ENCODE measurements at regions of chr5 and their contacts with region 1.

Region 1: DNA sequence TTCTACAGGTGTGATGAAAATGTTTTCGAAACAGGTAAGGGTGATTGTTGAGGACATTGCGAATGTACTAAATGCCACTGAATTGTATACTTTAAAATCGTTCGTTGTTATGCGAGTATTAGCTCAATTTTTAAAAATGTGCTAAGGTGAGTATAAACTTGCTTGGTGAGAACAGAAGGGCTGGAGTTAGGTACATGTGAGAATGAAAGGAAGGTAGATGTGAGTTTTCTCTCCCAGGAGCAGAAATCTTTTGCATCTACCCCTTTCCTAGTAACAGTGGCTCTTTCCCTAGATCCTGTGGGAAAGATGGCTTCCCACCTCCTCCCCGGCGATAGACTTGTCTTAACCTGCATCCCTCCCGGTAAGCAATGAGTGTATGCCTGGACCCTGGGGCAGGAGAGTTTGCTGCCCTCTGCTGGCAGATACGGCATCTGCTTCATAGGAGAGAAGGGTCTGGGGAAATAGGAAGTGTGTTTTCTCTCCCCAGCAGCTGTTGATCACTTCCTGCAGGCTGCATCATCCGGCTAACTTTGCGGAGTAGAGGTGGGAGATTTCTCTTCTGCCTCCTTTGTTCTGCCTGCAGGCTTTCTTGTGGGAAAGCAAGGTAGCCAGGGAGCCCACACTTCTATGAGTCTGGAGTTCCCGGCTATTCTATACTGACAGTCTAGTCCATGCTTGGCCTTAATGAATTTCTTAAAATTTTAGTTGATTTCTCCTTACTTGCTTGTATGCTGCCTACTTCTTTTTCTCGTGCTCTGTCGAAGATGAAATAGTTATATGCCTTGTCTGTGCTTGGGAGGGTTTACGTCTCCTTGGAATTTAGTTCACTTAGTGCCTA is 373.3 kb upstream of the SEMA6A start:
- DNase-seq: peak; percentile 73
- H3K4me3 ChIP-seq: no peak overlapping the region
- H3K27ac ChIP-seq: no peak overlapping the region
- H3K4me1 ChIP-seq: no peaks in the 10 kb centered on the region
- H3K27me3 ChIP-seq: no peaks in the 10 kb centered on the region
- CTCF ChIP-seq: peak; percentile 80 to 92

Region 2: DNA sequence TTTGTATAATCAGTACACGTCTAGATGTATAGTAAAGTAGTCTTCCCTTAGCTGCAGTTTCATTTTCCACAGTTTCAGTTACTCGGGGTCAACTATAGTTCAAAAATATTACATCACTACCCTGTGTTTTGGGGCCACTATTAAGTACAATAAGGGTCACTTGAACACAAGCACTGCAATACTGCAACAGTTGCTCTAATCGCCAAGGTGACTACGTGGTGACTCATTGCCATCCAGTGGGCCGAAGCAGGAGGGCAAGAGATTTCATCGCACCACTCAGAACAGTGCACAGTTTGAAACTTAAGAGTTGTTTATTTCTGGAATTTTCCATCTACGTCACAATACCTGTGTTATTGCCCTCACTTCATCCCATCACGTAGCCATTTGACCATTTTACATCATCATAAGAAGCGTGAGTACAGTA is 915.8 kb before region 1 on chr5 and contains the start of gene ARL14EPL:
- CTCF ChIA-PET with region 1: no interaction called
- dilution Hi-C with region 1: no loop called
- in situ Hi-C with region 1: no loop called
- intact Hi-C with region 1: no loop called
- DNase-seq: peak; percentile 71
- H3K4me3 ChIP-seq: no peak within 1 kb of the TSS
- H3K27ac ChIP-seq: no peak within 1 kb of the TSS
- H3K4me1 ChIP-seq: no peaks in the 10 kb centered on the region
- H3K27me3 ChIP-seq: peaks cover 3% of the 10 kb centered on the region
- CTCF ChIP-seq: no peak
- total RNA-seq, gene ARL14EPL: not detected

Region 3: GRCh38 chr5:116557669-116558271 is 390.1 kb before region 1 on chr5:
- CTCF ChIA-PET with region 1: no interaction called
- dilution Hi-C with region 1: no loop called
- in situ Hi-C with region 1: loop called in 1 of 2 experiments (anchors 10 kb)
- intact Hi-C with region 1: loop called (anchors 1 kb)
- DNase-seq: peak; percentile 9
- H3K4me3 ChIP-seq: no peak overlapping the region
- H3K27ac ChIP-seq: no peak overlapping the region
- H3K4me1 ChIP-seq: no peaks in the 10 kb centered on the region
- H3K27me3 ChIP-seq: peaks cover 7% of the 10 kb centered on the region
- CTCF ChIP-seq: peak; percentile 56 to 76

Region 4: DNA sequence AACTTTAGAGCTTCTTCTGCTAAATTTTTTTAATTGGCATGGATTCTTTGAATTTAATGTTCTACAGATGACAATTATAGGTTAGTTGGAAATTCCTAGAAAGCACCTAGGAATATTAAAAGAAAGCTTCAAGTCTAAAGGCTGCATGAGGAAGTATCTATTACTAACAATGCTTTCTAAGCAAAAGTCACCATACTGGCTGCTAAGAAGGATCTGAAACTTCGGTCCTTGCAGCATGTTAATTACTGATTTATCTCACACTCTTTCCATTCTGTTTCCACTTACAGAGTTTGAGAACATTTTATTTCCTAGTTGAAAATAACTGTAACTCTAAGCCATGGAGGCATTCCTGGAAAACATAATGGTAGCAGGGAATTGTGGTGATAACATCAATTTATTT is 381.7 kb before region 1 on chr5:
- CTCF ChIA-PET with region 1: no interaction called
- dilution Hi-C with region 1: no loop called
- in situ Hi-C with region 1: loop called in 1 of 2 experiments (anchors 10 kb)
- intact Hi-C with region 1: no loop called
- DNase-seq: no peak
- H3K4me3 ChIP-seq: no peak overlapping the region
- H3K27ac ChIP-seq: no peak overlapping the region
- H3K4me1 ChIP-seq: no peaks in the 10 kb centered on the region
- H3K27me3 ChIP-seq: peaks cover 5% of the 10 kb centered on the region
- CTCF ChIP-seq: no peak

Region 5: DNA sequence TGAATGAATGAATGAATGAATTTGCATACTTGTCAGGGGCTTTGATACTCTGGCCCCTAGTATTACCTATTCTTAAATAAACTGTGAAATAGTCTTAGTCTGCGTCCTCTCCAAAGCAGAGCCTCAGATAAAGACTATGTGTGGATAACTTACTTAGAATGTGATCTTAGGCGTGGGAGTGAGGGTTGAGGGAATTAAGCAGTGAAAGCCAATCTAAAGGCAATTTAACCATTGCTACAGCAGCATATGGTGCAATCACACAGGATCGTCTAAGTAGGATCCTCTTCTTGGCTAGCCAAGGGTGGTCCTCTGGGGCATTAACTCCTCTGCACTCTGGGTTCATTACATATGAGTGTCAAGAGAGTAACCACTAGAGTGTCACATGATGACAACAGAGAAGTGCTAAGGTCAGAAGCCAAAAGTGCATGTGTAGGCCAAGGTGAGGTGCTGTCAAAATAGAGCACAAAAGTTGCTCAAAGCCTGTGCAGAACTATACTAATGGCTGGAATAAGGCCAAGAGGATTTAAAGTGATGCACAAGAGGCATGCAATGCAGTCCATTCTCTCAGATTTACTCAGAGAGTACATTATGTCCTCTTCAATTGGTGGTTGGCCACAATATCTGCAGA is 98.8 kb before region 1 on chr5:
- CTCF ChIA-PET with region 1: no interaction called
- dilution Hi-C with region 1: no loop called
- in situ Hi-C with region 1: no loop called
- intact Hi-C with region 1: no loop called
- DNase-seq: no peak
- H3K4me3 ChIP-seq: no peak overlapping the region
- H3K27ac ChIP-seq: no peak overlapping the region
- H3K4me1 ChIP-seq: no peaks in the 10 kb centered on the region
- H3K27me3 ChIP-seq: no peaks in the 10 kb centered on the region
- CTCF ChIP-seq: no peak